HEK293 (cell line): ENCODE measurements at regions of chr7 and their contacts with region 1.

Region 1: DNA sequence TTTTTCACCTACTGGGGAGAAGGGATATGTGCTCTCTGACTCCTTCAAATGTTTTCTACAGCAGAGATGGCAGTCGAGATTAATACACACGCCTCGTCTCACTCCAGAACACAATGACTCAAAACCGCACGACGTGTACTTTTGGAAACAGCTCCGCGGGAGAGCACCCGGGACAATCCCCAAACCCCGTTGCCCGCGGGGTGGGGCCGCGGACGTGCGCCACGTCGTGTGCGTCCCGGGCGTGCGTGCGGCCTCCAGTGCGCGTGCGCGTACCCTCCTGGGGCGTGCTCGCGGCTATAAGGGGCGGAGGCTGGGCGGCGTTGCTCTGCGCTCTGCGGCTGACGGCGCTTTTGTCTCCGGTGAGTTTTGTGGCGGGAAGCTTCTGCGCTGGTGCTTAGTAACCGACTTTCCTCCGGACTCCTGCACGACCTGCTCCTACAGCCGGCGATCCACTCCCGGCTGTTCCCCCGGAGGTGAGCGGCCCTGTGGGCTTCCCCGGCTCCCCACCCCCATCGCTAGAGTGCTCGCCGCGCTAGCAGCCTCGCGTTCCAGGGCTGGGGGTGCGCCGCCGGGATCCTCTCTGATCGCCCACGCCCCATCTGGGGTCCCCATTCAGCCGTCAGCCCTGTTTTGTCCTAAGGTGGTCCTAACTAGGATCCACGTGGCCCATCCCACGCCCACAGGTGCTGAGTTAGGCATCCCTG is at the start of gene HILPDA:
- H3K4me3 ChIP-seq: peak within 1 kb of the TSS; percentile 56
- H3K27ac ChIP-seq: peak within 1 kb of the TSS; percentile 81
- H3K4me1 ChIP-seq: peaks cover 14% of the 10 kb centered on the region
- CTCF ChIP-seq: no peak

Region 2: GRCh38 chr7:128409596-128410160 is 46.0 kb before region 1 on chr7 and contains the start of gene IMPDH1:
- CTCF ChIA-PET with region 1: interaction called, 16 read pairs
- POLR2A ChIA-PET with region 1: no interaction called
- H3K4me3 ChIP-seq: peak within 1 kb of the TSS; percentile 70
- H3K27ac ChIP-seq: peak within 1 kb of the TSS; percentile 45
- H3K4me1 ChIP-seq: no peaks in the 10 kb centered on the region; the same call in 1 of the 2 replicates
- CTCF ChIP-seq: no peak

Region 3: GRCh38 chr7:128431221-128431620 is 24.5 kb before region 1 on chr7:
- CTCF ChIA-PET with region 1: interaction called, 189 read pairs
- POLR2A ChIA-PET with region 1: interaction called, 7 read pairs
- H3K4me3 ChIP-seq: no peak overlapping the region
- H3K27ac ChIP-seq: no peak overlapping the region
- H3K4me1 ChIP-seq: no peaks in the 10 kb centered on the region
- CTCF ChIP-seq: no peak

Region 4: GRCh38 chr7:128443831-128444600 is 11.7 kb before region 1 on chr7:
- CTCF ChIA-PET with region 1: interaction called, 21 read pairs
- POLR2A ChIA-PET with region 1: interaction called, 8 read pairs
- H3K4me3 ChIP-seq: no peak overlapping the region
- H3K27ac ChIP-seq: no peak overlapping the region
- H3K4me1 ChIP-seq: no peaks in the 10 kb centered on the region
- CTCF ChIP-seq: no peak